CD4-positive, alpha-beta T cell (primary cell): ENCODE measurements at regions of chr6 and their contacts with region 1.

Region 1: GRCh38 chr6:75266716-75267291 is 17.8 kb downstream of the TMEM30A start:
- DNase-seq: peak in 3 of 14 experiments; percentile 58 to 67 (median 66)
- ATAC-seq: peak; percentile 76
- H3K4me3 ChIP-seq: no peak overlapping the region
- H3K4me3 Mint-ChIP-seq: no peak overlapping the region
- H3K27ac ChIP-seq: no peak overlapping the region
- H3K27ac Mint-ChIP-seq: peak overlapping the region; percentile 0
- H3K4me1 ChIP-seq: no peaks in the 10 kb centered on the region
- H3K4me1 Mint-ChIP-seq: peaks cover 43% of the 10 kb centered on the region
- H3K27me3 ChIP-seq: no peaks in the 10 kb centered on the region
- H3K27me3 Mint-ChIP-seq: no peaks in the 10 kb centered on the region
- CTCF ChIP-seq: peak; percentile 89

Region 2: GRCh38 chr6:75284632-75285286 is 18.0 kb after region 1 on chr6 and contains the start of gene TMEM30A:
- CTCF ChIA-PET with region 1: interaction called, 5 read pairs
- POLR2A ChIA-PET with region 1: interaction called, 6 read pairs
- intact Hi-C with region 1: loop called in 1 of 2 experiments (anchors 2 kb)
- DNase-seq: peak; percentile 90 to 100 (median 95)
- ATAC-seq: peak; percentile 96
- H3K4me3 ChIP-seq: peak within 1 kb of the TSS; percentile 78
- H3K4me3 Mint-ChIP-seq: no peak within 1 kb of the TSS
- H3K27ac ChIP-seq: peak within 1 kb of the TSS; percentile 76 to 85
- H3K27ac Mint-ChIP-seq: no peak within 1 kb of the TSS
- H3K4me1 ChIP-seq: peaks cover 9% of the 10 kb centered on the region
- H3K4me1 Mint-ChIP-seq: peaks cover 47% of the 10 kb centered on the region
- H3K27me3 ChIP-seq: no peaks in the 10 kb centered on the region
- H3K27me3 Mint-ChIP-seq: no peaks in the 10 kb centered on the region
- CTCF ChIP-seq: no peak
- total RNA-seq, gene TMEM30A: 29.8 to 33.2 TPM

Region 3: GRCh38 chr6:75308250-75308988 is 41.6 kb after region 1 on chr6:
- CTCF ChIA-PET with region 1: no interaction called
- POLR2A ChIA-PET with region 1: no interaction called
- intact Hi-C with region 1: no loop called
- DNase-seq: no peak
- ATAC-seq: no peak
- H3K4me3 ChIP-seq: no peak overlapping the region
- H3K4me3 Mint-ChIP-seq: no peak overlapping the region
- H3K27ac ChIP-seq: no peak overlapping the region
- H3K27ac Mint-ChIP-seq: no peak overlapping the region
- H3K4me1 ChIP-seq: no peaks in the 10 kb centered on the region
- H3K4me1 Mint-ChIP-seq: peaks cover 7% of the 10 kb centered on the region
- H3K27me3 ChIP-seq: peaks cover 3 to 5% of the 10 kb centered on the region in 2 experiments
- H3K27me3 Mint-ChIP-seq: peaks cover 17% of the 10 kb centered on the region
- CTCF ChIP-seq: no peak

Region 4: GRCh38 chr6:75526502-75527127 is 259.8 kb after region 1 on chr6:
- CTCF ChIA-PET with region 1: interaction called, 3 read pairs
- POLR2A ChIA-PET with region 1: no interaction called
- intact Hi-C with region 1: loop called (anchors 1 to 2 kb)
- DNase-seq: peak; percentile 2 to 79 (median 39)
- ATAC-seq: peak; percentile 82
- H3K4me3 ChIP-seq: no peak overlapping the region
- H3K4me3 Mint-ChIP-seq: no peak overlapping the region
- H3K27ac ChIP-seq: no peak overlapping the region
- H3K27ac Mint-ChIP-seq: no peak overlapping the region
- H3K4me1 ChIP-seq: no peaks in the 10 kb centered on the region
- H3K4me1 Mint-ChIP-seq: no peaks in the 10 kb centered on the region
- H3K27me3 ChIP-seq: peaks cover 0 to 16% of the 10 kb centered on the region in 2 experiments
- H3K27me3 Mint-ChIP-seq: peaks cover 52% of the 10 kb centered on the region
- CTCF ChIP-seq: peak; percentile 72

Region 5: DNA sequence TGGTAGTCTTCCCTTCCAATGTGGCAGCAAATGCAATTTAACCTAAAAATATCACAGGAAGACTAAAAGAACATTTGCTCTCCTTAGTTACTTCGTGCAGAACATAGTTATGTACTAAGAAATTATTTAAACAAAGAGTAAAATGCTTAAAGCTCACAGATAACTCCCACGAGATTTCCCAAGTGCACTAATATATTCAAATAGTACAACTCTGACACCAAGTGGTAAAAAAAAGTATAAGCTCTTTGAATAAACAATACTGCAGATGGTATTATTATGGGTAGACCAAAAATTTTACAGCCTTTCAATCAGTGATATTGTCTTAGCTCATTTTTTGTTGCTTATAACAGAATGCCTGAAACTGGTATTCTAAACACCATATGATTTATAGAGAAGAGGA is 279.6 kb after region 1 on chr6:
- CTCF ChIA-PET with region 1: no interaction called
- POLR2A ChIA-PET with region 1: no interaction called
- intact Hi-C with region 1: loop called in 1 of 2 experiments (anchors 1 kb)
- DNase-seq: peak in 3 of 14 experiments; percentile 10 to 11 (median 11)
- ATAC-seq: no peak
- H3K4me3 ChIP-seq: no peak overlapping the region
- H3K4me3 Mint-ChIP-seq: no peak overlapping the region
- H3K27ac ChIP-seq: no peak overlapping the region
- H3K27ac Mint-ChIP-seq: no peak overlapping the region
- H3K4me1 ChIP-seq: no peaks in the 10 kb centered on the region
- H3K4me1 Mint-ChIP-seq: no peaks in the 10 kb centered on the region
- H3K27me3 ChIP-seq: peaks cover 0 to 2% of the 10 kb centered on the region in 2 experiments
- H3K27me3 Mint-ChIP-seq: peaks cover 13% of the 10 kb centered on the region
- CTCF ChIP-seq: no peak